Dorsolateral prefrontal cortex (tissue), 120 donors: ENCODE measurements at regions of chr10 and their contacts with region 1.

Region 1: DNA sequence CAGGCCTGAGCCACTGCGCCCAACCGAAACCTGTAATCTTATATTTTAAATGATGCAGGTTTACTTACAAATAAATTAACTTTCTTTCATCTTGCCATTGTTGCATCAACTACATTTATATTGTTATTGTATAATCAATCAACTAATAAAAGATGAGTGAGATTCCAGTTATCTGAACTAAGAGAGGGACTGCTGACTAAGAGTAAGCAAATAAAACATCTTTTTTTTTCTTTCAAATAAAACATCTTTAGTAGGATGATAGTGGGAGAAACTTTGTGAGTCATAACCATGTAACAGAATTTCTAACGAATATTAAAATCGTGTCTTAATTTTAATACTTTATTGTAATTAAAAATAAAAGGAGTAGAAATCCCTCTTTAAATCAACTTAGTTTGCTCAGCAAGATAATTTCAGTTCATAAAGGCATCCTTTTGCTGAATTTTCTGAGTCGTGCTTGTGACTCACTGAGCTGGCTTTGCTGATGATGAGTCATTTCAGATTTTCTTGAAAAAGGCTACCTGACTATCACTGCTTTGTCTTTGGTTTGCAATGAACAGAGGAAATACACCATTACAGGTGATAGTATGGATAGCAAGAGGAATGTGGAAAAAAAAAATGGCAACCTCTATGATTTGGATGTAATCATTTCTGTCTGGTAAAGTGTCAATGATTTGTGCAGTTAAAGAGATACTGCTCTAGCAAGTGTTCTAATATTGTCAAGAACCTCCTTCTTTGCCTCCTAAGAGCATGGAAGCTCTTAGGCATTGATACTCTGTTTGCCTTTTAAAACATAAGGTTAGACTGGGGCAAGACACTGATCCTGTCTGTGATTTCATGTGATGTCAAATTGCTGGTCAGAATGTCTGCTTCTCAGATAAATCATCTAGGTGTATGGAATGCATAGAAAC is 119.5 kb downstream of the GPR158 start:
- DNase-seq: no peak
- H3K4me3 ChIP-seq: no peak overlapping the region
- H3K27ac ChIP-seq: no peak overlapping the region
- H3K27me3 ChIP-seq: no peaks in the 10 kb centered on the region
- CTCF ChIP-seq: no peak

Region 2: GRCh38 chr10:25257651-25258050 is 36.6 kb before region 1 on chr10:
- intact Hi-C with region 1: no loop called
- DNase-seq: no peak
- H3K4me3 ChIP-seq: no peak overlapping the region
- H3K27ac ChIP-seq: no peak overlapping the region
- H3K27me3 ChIP-seq: no peaks in the 10 kb centered on the region
- CTCF ChIP-seq: no peak

Region 3: GRCh38 chr10:25278180-25278579 is 16.1 kb before region 1 on chr10:
- intact Hi-C with region 1: loop called in 1 of 2 experiments (anchors 2 kb)
- DNase-seq: no peak
- H3K4me3 ChIP-seq: no peak overlapping the region
- H3K27ac ChIP-seq: no peak overlapping the region
- H3K27me3 ChIP-seq: no peaks in the 10 kb centered on the region
- CTCF ChIP-seq: no peak